ENCODE measurements at regions of chr6 and their contacts with region 1.

Region 1: GRCh38 chr6:33781114-33781975 is 7.6 kb downstream of the LEMD2 start:
- DNase-seq: peak; percentile 59 to 69
- ATAC-seq: peak; percentile 82 to 89
- H3K4me3 ChIP-seq: no peak overlapping the region
- H3K27ac ChIP-seq: peak overlapping the region; percentile 75 to 87
- H3K4me1 ChIP-seq: peaks cover 29% of the 10 kb centered on the region
- CTCF ChIP-seq: no peak
- EP300 ChIP-seq: no peak
- POLR2A ChIP-seq: no peak
- RAD21 ChIP-seq: no peak

Region 2: GRCh38 chr6:32058511-32058963 is 1722.8 kb before region 1 on chr6:
- CTCF ChIA-PET with region 1: no interaction called
- POLR2A ChIA-PET with region 1: no interaction called
- DNase-seq: no peak
- ATAC-seq: no peak
- H3K4me3 ChIP-seq: no peak overlapping the region
- H3K27ac ChIP-seq: no peak overlapping the region
- H3K4me1 ChIP-seq: no peaks in the 10 kb centered on the region
- CTCF ChIP-seq: no peak
- EP300 ChIP-seq: no peak
- POLR2A ChIP-seq: no peak
- RAD21 ChIP-seq: no peak

Region 3: GRCh38 chr6:33761922-33762629 is 19.3 kb before region 1 on chr6:
- CTCF ChIA-PET with region 1: interaction called, 62 read pairs
- POLR2A ChIA-PET with region 1: no interaction called
- DNase-seq: peak; percentile 40 to 59
- ATAC-seq: peak; percentile 86 to 93
- H3K4me3 ChIP-seq: no peak overlapping the region
- H3K27ac ChIP-seq: peak overlapping the region; percentile 63 to 65; a peak in 4 of 6 replicates
- H3K4me1 ChIP-seq: peaks cover 27% of the 10 kb centered on the region
- CTCF ChIP-seq: peak; percentile 64
- EP300 ChIP-seq: no peak
- POLR2A ChIP-seq: no peak
- RAD21 ChIP-seq: peak; percentile 69 to 77

Region 4: DNA sequence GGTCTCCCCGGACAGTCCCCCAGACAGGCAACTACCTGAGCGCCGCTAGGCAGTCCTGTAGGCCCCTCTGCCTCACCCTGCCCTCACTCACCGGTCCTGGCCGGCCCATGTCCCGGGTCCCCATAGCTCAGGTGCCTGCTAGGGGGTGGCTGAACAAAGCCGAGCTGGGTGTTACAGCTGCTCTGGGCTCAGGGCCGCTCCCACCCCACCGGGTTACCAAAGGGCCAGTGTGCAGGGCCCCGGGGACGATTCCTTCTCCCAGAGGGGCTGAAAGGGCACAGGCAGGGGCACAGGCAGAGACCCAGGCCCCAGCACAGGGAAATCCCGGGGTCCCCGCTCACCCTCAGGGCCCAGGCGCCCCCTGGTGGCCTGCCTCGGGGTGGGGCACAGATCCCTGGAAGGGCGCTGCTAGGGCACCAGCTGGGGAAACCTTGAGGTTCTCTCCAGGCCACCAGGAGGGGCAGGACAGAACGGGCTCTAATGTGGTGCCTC is 246.1 kb after region 1 on chr6:
- CTCF ChIA-PET with region 1: interaction called, 14 read pairs
- POLR2A ChIA-PET with region 1: no interaction called
- DNase-seq: peak; percentile 24 to 68
- ATAC-seq: peak; percentile 84 to 94
- H3K4me3 ChIP-seq: no peak overlapping the region
- H3K27ac ChIP-seq: peak overlapping the region in 1 of 2 experiments; percentile 60; a peak in 2 of 6 replicates
- H3K4me1 ChIP-seq: no peaks in the 10 kb centered on the region
- CTCF ChIP-seq: peak; percentile 63
- EP300 ChIP-seq: no peak
- POLR2A ChIP-seq: no peak
- RAD21 ChIP-seq: peak; percentile 77 to 87

Region 5: GRCh38 chr6:34106900-34107573 is 325.7 kb after region 1 on chr6:
- CTCF ChIA-PET with region 1: no interaction called
- POLR2A ChIA-PET with region 1: no interaction called
- DNase-seq: no peak
- ATAC-seq: peak in 1 of 2 experiments; percentile 45; a peak in 1 of 6 replicates
- H3K4me3 ChIP-seq: no peak overlapping the region
- H3K27ac ChIP-seq: no peak overlapping the region
- H3K4me1 ChIP-seq: no peaks in the 10 kb centered on the region
- CTCF ChIP-seq: no peak
- EP300 ChIP-seq: no peak
- POLR2A ChIP-seq: no peak
- RAD21 ChIP-seq: no peak